Activated naive CD4-positive, alpha-beta T cell treated with anti-CD3 and anti-CD28 coated beads for 36 hours (primary cell): ENCODE measurements at regions of chr5 and their contacts with region 1.

Region 1: GRCh38 chr5:103139264-103139865 is 19.3 kb downstream of the PPIP5K2 start:
- DNase-seq: peak; percentile 92
- H3K4me3 Mint-ChIP-seq: no peak overlapping the region
- H3K27ac Mint-ChIP-seq: no peak overlapping the region
- H3K4me1 Mint-ChIP-seq: peaks cover 5% of the 10 kb centered on the region
- H3K27me3 Mint-ChIP-seq: no peaks in the 10 kb centered on the region

Region 2: DNA sequence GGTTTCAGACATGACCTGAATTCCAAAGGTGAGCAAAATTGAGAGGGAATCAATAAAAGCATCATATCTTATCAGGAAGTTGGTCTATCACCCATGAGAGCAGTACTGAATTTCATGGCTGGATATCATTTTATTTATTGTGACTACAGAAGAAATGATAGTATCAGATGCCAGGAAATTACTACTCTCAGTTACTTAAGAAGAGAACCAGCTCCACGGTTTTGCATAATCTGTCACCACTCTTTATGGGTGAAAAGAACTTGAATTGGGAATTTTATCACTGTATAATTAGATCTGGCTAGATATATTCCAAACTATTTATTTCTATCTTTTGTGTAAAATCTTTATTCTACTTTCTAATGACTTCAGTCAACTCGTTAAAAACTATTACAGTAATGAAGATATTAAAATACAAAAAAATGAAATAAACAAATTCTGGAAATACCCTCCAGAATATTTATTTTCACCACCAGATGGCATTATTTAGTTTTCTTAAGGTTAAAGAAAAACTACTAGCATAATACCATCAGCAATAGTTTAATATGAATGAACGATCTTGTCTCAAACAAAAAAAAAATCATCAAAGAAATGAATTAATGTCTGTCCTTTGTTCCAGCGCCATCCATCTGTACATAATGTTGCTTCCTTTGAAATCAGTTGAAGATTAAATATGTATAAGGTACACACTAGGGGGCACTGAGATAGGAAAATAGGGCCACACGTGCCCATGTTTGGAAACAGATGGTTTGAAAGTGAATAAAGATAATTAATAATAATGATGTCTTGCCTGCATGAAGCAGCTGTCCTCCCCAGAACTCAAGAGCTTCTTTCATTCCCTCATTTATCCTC is 555.9 kb before region 1 on chr5:
- CTCF ChIA-PET with region 1: interaction called, 3 read pairs
- intact Hi-C with region 1: loop called (anchors 1 kb)
- DNase-seq: no peak
- H3K4me3 Mint-ChIP-seq: no peak overlapping the region
- H3K27ac Mint-ChIP-seq: no peak overlapping the region
- H3K4me1 Mint-ChIP-seq: no peaks in the 10 kb centered on the region
- H3K27me3 Mint-ChIP-seq: peaks cover 6% of the 10 kb centered on the region

Region 3: DNA sequence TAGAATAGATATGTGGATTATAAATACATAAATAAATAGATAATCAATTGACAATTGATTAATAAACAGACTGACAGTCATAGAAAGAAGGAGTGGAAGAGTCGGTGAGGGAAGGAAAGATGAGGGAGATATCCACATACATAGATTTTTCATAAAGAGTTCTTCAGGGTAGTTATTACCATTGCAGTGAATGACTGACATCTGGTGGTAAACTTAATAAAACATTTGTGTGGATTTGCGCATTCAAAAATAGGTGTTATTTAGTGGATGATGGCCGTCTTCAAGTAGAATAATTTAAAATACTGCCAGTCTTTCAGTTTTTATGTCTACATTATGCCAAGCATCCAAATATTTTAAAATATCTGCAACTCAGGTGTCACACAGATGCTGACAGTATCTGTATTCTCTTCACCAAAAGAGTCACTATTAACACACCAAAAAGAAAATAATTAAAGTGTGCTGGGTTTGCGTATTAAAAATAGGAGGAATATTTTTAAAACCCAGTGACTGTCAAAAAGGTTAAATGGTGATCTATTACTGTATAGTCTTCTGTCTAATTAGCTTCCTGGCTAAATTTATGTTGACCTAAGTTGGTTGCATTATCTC is 98.2 kb before region 1 on chr5:
- CTCF ChIA-PET with region 1: interaction called, 6 read pairs
- intact Hi-C with region 1: loop called (anchors 1 kb)
- DNase-seq: no peak
- H3K4me3 Mint-ChIP-seq: no peak overlapping the region
- H3K27ac Mint-ChIP-seq: no peak overlapping the region
- H3K4me1 Mint-ChIP-seq: no peaks in the 10 kb centered on the region
- H3K27me3 Mint-ChIP-seq: no peaks in the 10 kb centered on the region

Region 4: DNA sequence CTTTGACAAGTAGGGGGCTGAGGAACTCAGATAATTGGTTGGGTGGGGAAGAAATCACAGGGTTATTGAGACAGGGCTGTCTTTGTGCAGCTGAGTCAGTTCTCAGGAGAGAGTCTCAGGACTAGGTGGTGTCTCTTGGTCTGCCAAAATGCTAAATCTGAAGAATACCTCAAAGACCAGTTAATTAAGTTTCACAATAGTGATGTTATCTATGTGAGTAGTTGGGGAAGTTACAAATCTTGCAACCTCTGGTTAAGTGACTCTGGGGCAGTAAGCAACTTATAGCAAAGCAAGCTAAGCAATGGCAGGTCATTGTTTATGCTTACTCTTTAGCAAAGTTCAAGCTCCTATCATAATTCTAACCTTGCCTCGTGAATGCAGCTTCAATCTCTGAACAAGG is 73.0 kb before region 1 on chr5:
- CTCF ChIA-PET with region 1: interaction called, 3 read pairs
- intact Hi-C with region 1: loop called (anchors 2 kb)
- DNase-seq: no peak
- H3K4me3 Mint-ChIP-seq: no peak overlapping the region
- H3K27ac Mint-ChIP-seq: no peak overlapping the region
- H3K4me1 Mint-ChIP-seq: no peaks in the 10 kb centered on the region
- H3K27me3 Mint-ChIP-seq: no peaks in the 10 kb centered on the region